Activated B cell treated with CpG ODN at 0.5 μM for 24 hours (primary cell): ENCODE measurements at regions of chr3 and their contacts with region 1.

Region 1: DNA sequence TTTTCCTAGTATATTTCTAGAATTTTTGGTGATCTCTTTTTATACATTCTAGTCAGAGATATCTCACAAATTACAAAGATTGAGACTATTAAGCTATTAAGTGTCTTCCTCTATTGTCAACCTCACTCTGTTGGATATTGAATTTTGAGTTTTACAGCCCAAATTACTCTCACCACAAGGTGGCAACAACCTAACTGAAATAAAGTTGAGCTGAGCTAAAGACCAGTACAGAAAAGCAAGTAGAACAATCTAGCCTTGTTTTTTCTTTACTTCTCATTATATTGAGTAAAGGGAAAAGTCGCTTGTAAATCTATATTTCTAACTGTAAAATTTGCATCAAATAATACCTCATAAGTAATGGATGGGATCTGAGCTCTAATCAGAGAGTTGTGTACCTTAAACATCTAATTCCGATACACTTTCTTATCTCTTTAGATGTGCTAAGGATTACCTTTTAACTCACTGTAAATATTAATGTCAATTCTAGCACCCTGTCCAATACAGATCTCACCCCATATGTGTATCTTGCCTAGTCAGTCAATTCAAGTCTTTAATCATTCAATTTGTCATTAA is 13.6 kb upstream of the COMMD2 start:
- DNase-seq: no peak
- ATAC-seq: no peak
- H3K4me3 Mint-ChIP-seq: no peak overlapping the region
- H3K27ac Mint-ChIP-seq: no peak overlapping the region
- H3K4me1 Mint-ChIP-seq: no peaks in the 10 kb centered on the region
- H3K27me3 Mint-ChIP-seq: peaks cover 12% of the 10 kb centered on the region
- CTCF ChIP-seq: no peak

Region 2: GRCh38 chr3:149777414-149778214 is 11.8 kb after region 1 on chr3:
- CTCF ChIA-PET with region 1: interaction called, 26 read pairs
- POLR2A ChIA-PET with region 1: no interaction called
- intact Hi-C with region 1: no loop called
- DNase-seq: no peak
- ATAC-seq: no peak
- H3K4me3 Mint-ChIP-seq: no peak overlapping the region
- H3K27ac Mint-ChIP-seq: no peak overlapping the region
- H3K4me1 Mint-ChIP-seq: peaks cover 24% of the 10 kb centered on the region
- H3K27me3 Mint-ChIP-seq: no peaks in the 10 kb centered on the region
- CTCF ChIP-seq: no peak

Region 3: GRCh38 chr3:149902498-149903139 is 136.8 kb after region 1 on chr3:
- CTCF ChIA-PET with region 1: interaction called, 5 read pairs
- POLR2A ChIA-PET with region 1: no interaction called
- intact Hi-C with region 1: loop called (anchors 1 kb)
- DNase-seq: no peak
- ATAC-seq: no peak
- H3K4me3 Mint-ChIP-seq: no peak overlapping the region
- H3K27ac Mint-ChIP-seq: no peak overlapping the region
- H3K4me1 Mint-ChIP-seq: no peaks in the 10 kb centered on the region
- H3K27me3 Mint-ChIP-seq: no peaks in the 10 kb centered on the region
- CTCF ChIP-seq: no peak

Region 4: DNA sequence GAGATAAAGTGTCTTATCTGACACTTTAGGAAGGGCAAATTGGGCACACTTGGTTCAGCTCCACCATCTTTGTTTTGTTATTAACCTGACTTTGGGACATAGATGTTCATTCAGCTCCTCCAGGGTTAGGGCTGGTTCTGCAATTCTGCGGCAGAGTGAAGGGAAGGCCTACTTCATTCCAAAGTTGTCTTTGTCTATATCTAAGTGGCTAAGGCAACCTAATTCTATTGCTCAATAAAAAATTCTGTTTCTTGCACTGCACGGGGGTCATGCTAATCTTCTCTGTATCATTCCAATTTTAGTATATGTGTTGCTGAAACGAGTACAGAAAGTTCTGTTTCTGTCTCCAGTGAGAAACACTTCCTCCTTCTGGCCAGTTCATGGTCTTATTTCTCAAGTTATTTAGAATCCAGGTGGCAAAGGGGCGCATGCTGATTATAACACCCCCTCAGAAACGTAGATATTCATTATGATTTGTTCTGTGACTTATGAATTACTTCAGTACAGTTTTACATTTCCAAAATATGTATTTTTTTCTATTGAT is 151.3 kb after region 1 on chr3:
- CTCF ChIA-PET with region 1: no interaction called
- POLR2A ChIA-PET with region 1: no interaction called
- intact Hi-C with region 1: no loop called
- DNase-seq: no peak
- ATAC-seq: no peak
- H3K4me3 Mint-ChIP-seq: no peak overlapping the region
- H3K27ac Mint-ChIP-seq: no peak overlapping the region
- H3K4me1 Mint-ChIP-seq: peaks cover 3% of the 10 kb centered on the region
- H3K27me3 Mint-ChIP-seq: no peaks in the 10 kb centered on the region
- CTCF ChIP-seq: no peak

Region 5: DNA sequence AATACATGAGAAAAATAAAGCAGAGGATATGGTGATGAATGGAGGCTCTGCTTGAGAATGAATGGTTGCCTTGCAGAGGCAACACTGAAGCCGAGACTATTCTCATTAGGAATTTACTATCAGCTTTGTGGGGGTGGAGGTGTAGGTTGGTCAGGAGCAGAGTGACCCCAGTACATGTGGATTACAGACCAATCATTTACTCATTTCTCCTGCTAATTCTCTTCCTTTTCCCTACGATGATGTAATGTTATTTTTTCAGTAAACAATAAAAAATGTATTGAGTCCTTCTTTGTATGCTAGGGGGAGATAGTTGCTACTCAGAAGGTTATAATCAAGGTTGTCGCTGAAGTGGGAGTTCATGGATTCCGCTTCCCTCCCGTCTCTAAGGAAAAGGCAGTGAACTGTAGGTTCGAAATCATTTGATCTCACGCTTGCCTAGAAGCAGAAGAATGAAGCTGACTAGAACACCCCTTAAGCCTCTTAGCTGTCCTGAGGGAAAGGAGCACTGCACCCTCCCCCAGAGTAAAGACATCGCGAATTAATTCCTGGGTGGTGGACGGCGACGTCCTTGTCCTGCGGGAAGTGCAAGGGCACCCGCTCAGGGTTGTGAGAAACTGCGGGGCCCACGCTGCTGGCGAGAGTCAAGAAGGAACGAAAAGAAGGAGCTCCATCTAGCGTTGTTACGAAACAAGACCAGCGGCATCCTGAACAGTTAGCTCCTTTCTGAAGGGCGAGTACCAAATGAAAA is 418.0 kb after region 1 on chr3:
- CTCF ChIA-PET with region 1: interaction called, 11 read pairs
- POLR2A ChIA-PET with region 1: no interaction called
- intact Hi-C with region 1: loop called (anchors 1 kb)
- DNase-seq: peak; percentile 23
- ATAC-seq: peak; percentile 49
- H3K4me3 Mint-ChIP-seq: no peak overlapping the region
- H3K27ac Mint-ChIP-seq: no peak overlapping the region
- H3K4me1 Mint-ChIP-seq: no peaks in the 10 kb centered on the region
- H3K27me3 Mint-ChIP-seq: peaks cover 13% of the 10 kb centered on the region
- CTCF ChIP-seq: no peak

Region 6: DNA sequence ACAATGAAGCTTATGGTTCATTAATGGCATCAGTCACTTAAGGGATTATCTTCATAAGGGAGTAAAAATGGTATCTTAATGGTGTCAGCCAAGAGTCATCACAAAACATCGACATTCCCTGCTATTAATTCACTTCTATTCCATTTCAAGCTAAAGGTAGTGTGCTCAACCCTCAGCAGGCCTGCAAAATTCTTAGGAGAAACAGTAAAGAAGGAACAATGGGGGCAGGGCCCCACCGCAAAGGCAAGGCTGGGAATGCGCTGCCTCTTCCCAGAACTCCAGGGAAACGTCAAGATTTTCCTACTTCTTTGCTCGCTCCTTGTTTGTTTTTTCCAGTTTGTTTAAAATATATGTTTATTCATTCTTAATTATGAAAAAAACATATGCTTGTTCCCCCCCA is 455.0 kb after region 1 on chr3:
- CTCF ChIA-PET with region 1: interaction called, 7 read pairs
- POLR2A ChIA-PET with region 1: no interaction called
- intact Hi-C with region 1: loop called (anchors 1 kb)
- DNase-seq: no peak
- ATAC-seq: no peak
- H3K4me3 Mint-ChIP-seq: no peak overlapping the region
- H3K27ac Mint-ChIP-seq: no peak overlapping the region
- H3K4me1 Mint-ChIP-seq: peaks cover 6% of the 10 kb centered on the region
- H3K27me3 Mint-ChIP-seq: peaks cover 51% of the 10 kb centered on the region
- CTCF ChIP-seq: no peak